Mammary epithelial cell (primary cell): ENCODE measurements at regions of chr11 and their contacts with region 1.

Region 1: GRCh38 chr11:111777094-111778046 is 11.2 kb upstream of the PPP2R1B start:
- DNase-seq: peak; percentile 51
- H3K4me3 ChIP-seq: no peak overlapping the region
- H3K27ac ChIP-seq: no peak overlapping the region
- H3K4me1 ChIP-seq: no peaks in the 10 kb centered on the region
- H3K27me3 ChIP-seq: no peaks in the 10 kb centered on the region
- CTCF ChIP-seq: peak; percentile 68 to 78

Region 2: GRCh38 chr11:111454561-111455192 is 322.7 kb before region 1 on chr11:
- CTCF ChIA-PET with region 1: interaction called, 3 read pairs
- dilution Hi-C with region 1: no loop called
- in situ Hi-C with region 1: loop called (anchors 10 kb)
- intact Hi-C with region 1: loop called (anchors 1 kb)
- DNase-seq: peak; percentile 82
- H3K4me3 ChIP-seq: no peak overlapping the region
- H3K27ac ChIP-seq: no peak overlapping the region
- H3K4me1 ChIP-seq: peaks cover 6% of the 10 kb centered on the region
- H3K27me3 ChIP-seq: no peaks in the 10 kb centered on the region
- CTCF ChIP-seq: peak; percentile 28 to 56

Region 3: DNA sequence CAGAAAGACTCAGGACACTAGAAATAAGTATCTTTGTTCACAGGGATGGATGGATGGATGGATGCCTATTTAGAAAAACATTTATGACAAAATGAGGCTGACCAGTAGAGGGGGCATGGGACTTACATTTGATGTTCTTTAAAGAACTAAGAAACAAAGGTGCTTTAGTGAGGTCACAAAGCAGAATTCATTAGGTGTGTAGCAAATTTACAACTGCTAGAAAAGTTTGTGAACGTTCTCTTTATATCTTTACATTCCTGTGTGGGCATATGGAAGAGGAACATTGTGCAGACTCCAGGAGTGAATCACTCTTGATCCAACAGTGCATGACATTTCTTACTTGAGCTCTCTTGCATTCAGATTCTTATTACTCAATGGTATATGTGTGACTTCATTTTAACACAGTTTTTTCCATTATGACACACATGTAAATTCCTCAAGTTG is 191.0 kb before region 1 on chr11:
- CTCF ChIA-PET with region 1: no interaction called
- dilution Hi-C with region 1: no loop called
- in situ Hi-C with region 1: no loop called
- intact Hi-C with region 1: loop called (anchors 1 kb)
- DNase-seq: peak; percentile 62
- H3K4me3 ChIP-seq: no peak overlapping the region
- H3K27ac ChIP-seq: no peak overlapping the region
- H3K4me1 ChIP-seq: peaks cover 13% of the 10 kb centered on the region
- H3K27me3 ChIP-seq: no peaks in the 10 kb centered on the region
- CTCF ChIP-seq: peak; percentile 60 to 65

Region 4: DNA sequence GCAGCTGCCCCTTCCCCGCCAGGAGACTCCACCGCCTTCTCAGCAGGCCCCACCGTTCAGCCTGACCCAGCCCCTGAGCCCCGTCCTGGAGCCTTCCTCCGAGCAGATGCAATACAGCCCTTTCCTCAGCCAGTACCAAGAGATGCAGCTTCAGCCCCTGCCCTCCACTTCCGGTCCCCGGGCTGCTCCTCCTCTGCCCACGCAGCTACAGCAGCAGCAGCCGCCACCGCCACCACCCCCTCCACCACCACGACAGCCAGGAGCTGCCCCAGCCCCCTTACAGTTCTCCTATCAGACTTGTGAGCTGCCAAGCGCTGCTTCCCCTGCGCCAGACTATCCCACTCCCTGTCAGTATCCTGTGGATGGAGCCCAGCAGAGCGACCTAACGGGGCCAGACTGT is 53.8 kb before region 1 on chr11:
- CTCF ChIA-PET with region 1: no interaction called
- dilution Hi-C with region 1: loop called (anchors 5 kb)
- in situ Hi-C with region 1: no loop called
- intact Hi-C with region 1: no loop called
- DNase-seq: no peak
- H3K4me3 ChIP-seq: no peak overlapping the region
- H3K27ac ChIP-seq: no peak overlapping the region
- H3K4me1 ChIP-seq: peaks cover 12% of the 10 kb centered on the region
- H3K27me3 ChIP-seq: no peaks in the 10 kb centered on the region
- CTCF ChIP-seq: no peak